Activated CD4-positive, alpha-beta memory T cell treated with anti-CD3 and anti-CD28 coated beads for 36 hours (primary cell): ENCODE measurements at regions of chr17 and their contacts with region 1.

Region 1: DNA sequence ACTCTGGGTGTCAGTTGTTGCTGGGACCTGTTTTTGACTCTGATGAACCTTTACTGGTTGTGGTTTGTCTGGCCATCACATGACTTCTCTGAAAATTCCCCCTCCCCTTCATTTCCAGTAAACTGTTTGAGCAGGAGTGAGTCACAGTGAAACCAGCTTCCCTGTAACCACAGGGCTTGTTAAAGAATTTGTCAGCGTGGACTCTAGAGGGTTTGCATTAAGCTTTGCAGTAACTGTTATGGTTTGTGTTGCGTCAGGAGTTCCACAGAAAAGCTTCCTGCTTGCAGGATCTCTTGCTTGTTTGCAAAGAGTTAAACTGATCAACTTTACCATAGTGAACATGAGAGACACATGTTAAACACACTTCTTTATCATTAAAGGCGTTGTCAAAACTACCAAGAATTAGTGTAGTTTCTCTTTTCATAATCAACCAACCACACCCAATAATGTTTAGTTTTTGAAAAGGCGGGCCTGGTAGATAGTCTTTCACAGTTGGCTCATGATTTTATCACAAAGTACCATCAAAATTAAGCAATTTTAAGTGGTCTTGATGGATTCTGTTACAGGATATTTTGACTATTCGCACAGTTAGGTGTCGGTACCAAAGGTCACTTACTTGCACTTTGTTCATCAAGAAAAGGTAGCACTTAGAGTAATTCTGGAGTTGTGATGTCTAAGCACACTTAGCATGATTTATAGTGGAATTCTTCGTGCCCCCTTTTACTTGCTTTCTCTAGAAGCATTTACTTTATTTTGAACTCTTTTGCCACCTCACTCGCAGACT is 79.3 kb downstream of the VMP1 start:
- DNase-seq: peak; percentile 89
- H3K4me3 Mint-ChIP-seq: peak overlapping the region; percentile 77
- H3K27ac Mint-ChIP-seq: peak overlapping the region; percentile 100
- H3K4me1 Mint-ChIP-seq: peaks cover 64% of the 10 kb centered on the region
- H3K27me3 Mint-ChIP-seq: no peaks in the 10 kb centered on the region

Region 2: DNA sequence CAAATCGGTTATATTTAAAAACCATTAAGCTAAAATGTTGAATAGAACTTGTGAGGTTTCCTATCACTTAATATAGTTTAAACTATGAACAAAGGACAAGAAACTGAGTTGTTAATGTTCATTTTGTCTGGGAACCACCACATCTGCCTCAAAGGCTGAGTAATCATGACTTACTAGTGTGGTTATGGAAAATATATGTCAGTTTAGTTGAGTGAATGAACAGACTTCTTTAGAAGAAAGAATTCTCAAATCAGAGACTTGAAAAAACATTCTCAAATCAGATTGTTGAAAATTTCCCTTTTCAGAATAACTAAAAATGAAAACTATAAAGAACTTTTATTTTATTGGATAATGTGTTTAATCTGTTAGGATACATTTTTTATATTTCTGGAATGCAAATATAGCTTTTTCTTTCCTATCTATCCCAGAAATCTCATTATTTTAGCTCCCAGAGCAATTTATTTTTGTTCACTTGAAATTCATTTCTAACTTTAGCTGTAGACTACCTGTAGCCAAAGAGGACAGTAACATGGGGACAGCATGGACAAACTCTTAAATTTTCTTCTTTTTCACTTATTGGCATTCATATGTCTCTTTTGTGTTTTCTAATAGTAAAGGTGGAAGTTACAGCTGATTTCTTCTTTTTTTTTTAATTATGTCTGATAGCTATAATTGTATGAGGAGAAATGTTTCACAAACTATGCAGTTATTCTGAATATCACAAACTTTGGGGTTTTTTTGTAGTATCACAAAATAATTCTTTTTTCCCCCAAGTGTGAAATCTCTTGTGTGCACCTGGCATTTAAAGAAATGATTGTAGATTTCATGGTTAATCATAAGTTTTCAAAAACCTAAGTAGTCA is 24.0 kb before region 1 on chr17:
- CTCF ChIA-PET with region 1: interaction called, 7 read pairs
- POLR2A ChIA-PET with region 1: interaction called, 193 read pairs
- intact Hi-C with region 1: loop called (anchors 1 kb)
- DNase-seq: peak; percentile 24
- H3K4me3 Mint-ChIP-seq: peak overlapping the region; percentile 48
- H3K27ac Mint-ChIP-seq: peak overlapping the region; percentile 97
- H3K4me1 Mint-ChIP-seq: peaks cover 61% of the 10 kb centered on the region
- H3K27me3 Mint-ChIP-seq: no peaks in the 10 kb centered on the region

Region 3: GRCh38 chr17:59829217-59830006 is 42.7 kb after region 1 on chr17:
- CTCF ChIA-PET with region 1: interaction called, 45 read pairs
- POLR2A ChIA-PET with region 1: interaction called, 1,283 read pairs
- intact Hi-C with region 1: loop called (anchors 1 kb)
- DNase-seq: peak; percentile 66
- H3K4me3 Mint-ChIP-seq: peak overlapping the region; percentile 79
- H3K27ac Mint-ChIP-seq: peak overlapping the region; percentile 100
- H3K4me1 Mint-ChIP-seq: peaks cover 64% of the 10 kb centered on the region
- H3K27me3 Mint-ChIP-seq: no peaks in the 10 kb centered on the region

Region 4: GRCh38 chr17:59846394-59847165 is 59.9 kb after region 1 on chr17:
- CTCF ChIA-PET with region 1: interaction called, 12 read pairs
- POLR2A ChIA-PET with region 1: interaction called, 1,283 read pairs
- intact Hi-C with region 1: no loop called
- DNase-seq: peak; percentile 31
- H3K4me3 Mint-ChIP-seq: peak overlapping the region; percentile 60
- H3K27ac Mint-ChIP-seq: peak overlapping the region; percentile 100
- H3K4me1 Mint-ChIP-seq: peaks cover 68% of the 10 kb centered on the region
- H3K27me3 Mint-ChIP-seq: peaks cover 2% of the 10 kb centered on the region

Region 5: GRCh38 chr17:59892924-59893676 is 106.4 kb after region 1 on chr17 and contains the starts of genes RPS6KB1 and TUBD1:
- CTCF ChIA-PET with region 1: no interaction called
- POLR2A ChIA-PET with region 1: interaction called, 5 read pairs
- intact Hi-C with region 1: loop called (anchors 2 kb)
- DNase-seq: peak; percentile 99
- H3K4me3 Mint-ChIP-seq: peak within 1 kb of the TSS; percentile 99
- H3K27ac Mint-ChIP-seq: peak within 1 kb of the TSS; percentile 92
- H3K4me1 Mint-ChIP-seq: peaks cover 47% of the 10 kb centered on the region
- H3K27me3 Mint-ChIP-seq: no peaks in the 10 kb centered on the region
- total RNA-seq, gene RPS6KB1: 41.6 to 44.8 TPM
- total RNA-seq, gene TUBD1: 11.0 to 12.7 TPM

Region 6: DNA sequence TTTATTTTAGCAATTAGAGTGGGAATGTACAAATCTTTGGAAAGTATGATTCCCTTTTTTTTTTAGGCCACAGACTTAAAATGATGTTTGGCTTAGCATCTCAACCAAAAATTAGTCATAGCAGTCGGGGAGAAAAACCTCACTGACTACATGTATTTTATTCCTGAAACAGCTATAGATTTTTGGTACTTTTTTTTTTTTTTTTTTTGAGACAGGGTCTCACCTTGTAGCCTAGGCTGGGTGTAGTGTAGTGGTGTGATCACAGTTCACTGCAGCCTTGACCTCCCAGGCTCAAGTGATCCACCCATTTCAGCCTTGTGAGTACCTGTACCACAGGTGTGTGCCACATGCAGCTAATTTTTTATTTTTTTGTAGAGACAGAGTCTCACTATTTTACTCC is 154.4 kb after region 1 on chr17:
- CTCF ChIA-PET with region 1: no interaction called
- POLR2A ChIA-PET with region 1: no interaction called
- intact Hi-C with region 1: no loop called
- DNase-seq: peak; percentile 20
- H3K4me3 Mint-ChIP-seq: no peak overlapping the region
- H3K27ac Mint-ChIP-seq: peak overlapping the region; percentile 91
- H3K4me1 Mint-ChIP-seq: peaks cover 40% of the 10 kb centered on the region
- H3K27me3 Mint-ChIP-seq: no peaks in the 10 kb centered on the region

Region 7: GRCh38 chr17:60036796-60037612 is 250.3 kb after region 1 on chr17:
- CTCF ChIA-PET with region 1: no interaction called
- POLR2A ChIA-PET with region 1: no interaction called
- intact Hi-C with region 1: no loop called
- DNase-seq: peak; percentile 78
- H3K4me3 Mint-ChIP-seq: peak overlapping the region; percentile 32
- H3K27ac Mint-ChIP-seq: peak overlapping the region; percentile 40
- H3K4me1 Mint-ChIP-seq: peaks cover 5% of the 10 kb centered on the region
- H3K27me3 Mint-ChIP-seq: peaks cover 15% of the 10 kb centered on the region